ENCODE measurements at regions of chr16 and their contacts with region 1.

Region 1: DNA sequence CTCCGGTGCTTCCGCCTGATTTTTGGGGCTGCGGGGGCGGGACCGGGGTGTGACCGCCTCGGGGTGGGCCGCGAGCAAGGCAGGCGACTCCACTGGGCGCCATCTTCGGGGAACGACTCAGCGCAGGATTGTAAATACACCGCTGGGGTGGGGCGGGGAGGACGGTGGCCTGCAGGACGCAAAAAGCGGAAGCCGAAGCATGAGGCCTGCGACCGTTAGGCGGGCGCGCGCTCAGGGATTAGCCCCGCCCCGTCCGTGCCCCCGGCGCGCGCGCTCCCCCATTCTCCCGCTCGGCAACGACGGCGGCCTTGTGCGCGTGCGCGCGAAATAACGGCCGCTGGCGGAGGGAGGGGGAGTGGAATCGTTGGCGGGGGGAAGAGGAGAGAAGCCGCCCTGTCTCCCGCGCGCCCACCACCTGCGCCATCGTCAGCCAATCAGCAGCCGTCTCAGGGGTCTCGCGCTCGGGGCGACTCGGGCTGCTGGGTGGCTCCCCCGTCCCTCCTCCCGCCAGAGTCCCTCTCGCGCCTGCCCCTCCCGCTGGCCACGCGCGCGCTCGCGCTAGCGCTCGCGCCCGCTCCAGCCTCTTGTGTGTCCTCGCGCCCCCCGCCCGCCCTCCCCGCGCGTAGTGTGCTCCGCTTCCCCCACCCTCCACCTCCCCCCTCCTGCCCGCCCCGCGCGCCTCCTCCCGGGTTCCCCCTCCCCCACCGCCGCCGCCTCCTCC is 791 bp upstream of the MAZ start:
- DNase-seq: peak; percentile 95 to 99 (median 98)
- ATAC-seq: peak; percentile 63
- H3K4me3 ChIP-seq: peak overlapping the region; percentile 94
- H3K4me3 Mint-ChIP-seq: peak overlapping the region; percentile 100
- H3K27ac ChIP-seq: peak overlapping the region; percentile 92 to 96
- H3K27ac Mint-ChIP-seq: peak overlapping the region; percentile 96
- H3K4me1 ChIP-seq: peaks cover 52% of the 10 kb centered on the region
- H3K4me1 Mint-ChIP-seq: peaks cover 46% of the 10 kb centered on the region
- H3K27me3 ChIP-seq: no peaks in the 10 kb centered on the region
- H3K27me3 Mint-ChIP-seq: no peaks in the 10 kb centered on the region
- CTCF ChIP-seq: no peak

Region 2: GRCh38 chr16:29700253-29700987 is 105.1 kb before region 1 on chr16:
- CTCF ChIA-PET with region 1: interaction called, 47 read pairs
- POLR2A ChIA-PET with region 1: interaction called, 74 read pairs
- intact Hi-C with region 1: loop called in 1 of 2 experiments (anchors 5 kb)
- DNase-seq: peak; percentile 66 to 91 (median 74)
- ATAC-seq: peak; percentile 19
- H3K4me3 ChIP-seq: no peak overlapping the region
- H3K4me3 Mint-ChIP-seq: peak overlapping the region; percentile 76
- H3K27ac ChIP-seq: peak overlapping the region in 1 of 2 donors; percentile 81
- H3K27ac Mint-ChIP-seq: peak overlapping the region; percentile 94
- H3K4me1 ChIP-seq: peaks cover 41% of the 10 kb centered on the region
- H3K4me1 Mint-ChIP-seq: peaks cover 40% of the 10 kb centered on the region
- H3K27me3 ChIP-seq: no peaks in the 10 kb centered on the region
- H3K27me3 Mint-ChIP-seq: no peaks in the 10 kb centered on the region
- CTCF ChIP-seq: peak; percentile 93

Region 3: GRCh38 chr16:29784901-29785500 is 20.5 kb before region 1 on chr16:
- CTCF ChIA-PET with region 1: interaction called, 39 read pairs
- POLR2A ChIA-PET with region 1: interaction called, 217 read pairs
- intact Hi-C with region 1: loop called in 1 of 2 experiments (anchors 1 kb)
- DNase-seq: peak; percentile 55 to 87 (median 74)
- ATAC-seq: peak; percentile 91
- H3K4me3 ChIP-seq: peak overlapping the region; percentile 40
- H3K4me3 Mint-ChIP-seq: peak overlapping the region; percentile 80
- H3K27ac ChIP-seq: no peak overlapping the region
- H3K27ac Mint-ChIP-seq: peak overlapping the region; percentile 18
- H3K4me1 ChIP-seq: peaks cover 25% of the 10 kb centered on the region
- H3K4me1 Mint-ChIP-seq: peaks cover 33% of the 10 kb centered on the region
- H3K27me3 ChIP-seq: no peaks in the 10 kb centered on the region
- H3K27me3 Mint-ChIP-seq: no peaks in the 10 kb centered on the region
- CTCF ChIP-seq: peak; percentile 85

Region 4: DNA sequence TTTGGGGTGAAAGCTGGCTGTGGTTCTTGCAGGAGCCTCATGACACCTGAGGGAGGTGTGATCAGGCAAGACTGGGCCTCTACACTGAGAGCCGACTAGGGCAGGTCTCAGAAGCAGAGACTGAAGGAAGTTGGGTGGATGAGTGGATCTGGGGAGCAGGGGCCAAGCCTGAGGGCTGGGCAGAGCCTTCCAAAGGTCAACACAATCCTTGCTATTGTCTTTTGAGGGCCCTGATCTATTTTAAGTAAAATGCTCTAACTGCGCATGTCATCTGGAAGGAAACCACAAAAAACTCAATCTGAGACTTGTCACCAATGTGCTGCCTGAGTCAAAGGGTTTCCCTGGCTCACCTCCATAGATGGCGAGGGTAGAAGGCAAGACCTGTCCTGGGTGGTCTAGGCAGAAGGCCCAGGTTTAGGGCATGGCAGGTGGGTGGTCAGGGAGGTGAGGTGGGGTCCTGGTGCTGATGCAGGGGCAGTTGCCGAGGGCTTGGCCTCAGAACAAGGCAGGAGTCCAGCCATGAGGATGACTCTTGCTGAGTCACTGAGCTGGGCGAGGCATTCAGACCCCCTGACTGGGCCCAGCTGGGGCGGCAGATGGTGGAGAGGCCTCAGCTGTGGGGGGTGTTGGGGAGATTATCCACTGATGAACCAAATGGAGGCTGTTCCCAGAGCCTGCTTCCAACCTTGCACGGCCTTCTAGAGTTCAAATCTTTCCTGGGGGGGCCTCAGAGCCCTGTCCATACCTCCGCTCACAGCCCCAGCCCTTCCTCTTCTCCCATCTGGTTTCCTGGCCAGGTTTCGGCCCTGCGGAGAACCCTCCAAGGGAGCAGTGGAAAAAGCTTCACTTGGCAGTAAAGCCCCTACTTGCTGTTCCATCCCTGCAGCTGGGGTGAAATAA is 19.9 kb after region 1 on chr16:
- CTCF ChIA-PET with region 1: interaction called, 19 read pairs
- POLR2A ChIA-PET with region 1: interaction called, 190 read pairs
- intact Hi-C with region 1: loop called in 1 of 2 experiments (anchors 2 kb)
- DNase-seq: peak in 6 of 14 experiments; percentile 18 to 64 (median 48)
- ATAC-seq: peak; percentile 22
- H3K4me3 ChIP-seq: peak overlapping the region; percentile 13
- H3K4me3 Mint-ChIP-seq: peak overlapping the region; percentile 84
- H3K27ac ChIP-seq: peak overlapping the region; percentile 14 to 40
- H3K27ac Mint-ChIP-seq: peak overlapping the region; percentile 83
- H3K4me1 ChIP-seq: peaks cover 100% of the 10 kb centered on the region
- H3K4me1 Mint-ChIP-seq: peaks cover 79% of the 10 kb centered on the region
- H3K27me3 ChIP-seq: no peaks in the 10 kb centered on the region
- H3K27me3 Mint-ChIP-seq: no peaks in the 10 kb centered on the region
- CTCF ChIP-seq: no peak

Region 5: GRCh38 chr16:29926005-29926710 is 120.6 kb after region 1 on chr16 and contains the start of gene KCTD13:
- CTCF ChIA-PET with region 1: interaction called, 10 read pairs
- POLR2A ChIA-PET with region 1: interaction called, 8 read pairs
- intact Hi-C with region 1: no loop called
- DNase-seq: peak; percentile 75 to 94 (median 86)
- ATAC-seq: peak; percentile 89
- H3K4me3 ChIP-seq: peak within 1 kb of the TSS; percentile 74
- H3K4me3 Mint-ChIP-seq: peak within 1 kb of the TSS; percentile 95
- H3K27ac ChIP-seq: peak within 1 kb of the TSS; percentile 42 to 72
- H3K27ac Mint-ChIP-seq: peak within 1 kb of the TSS; percentile 93
- H3K4me1 ChIP-seq: peaks cover 30% of the 10 kb centered on the region
- H3K4me1 Mint-ChIP-seq: peaks cover 38% of the 10 kb centered on the region
- H3K27me3 ChIP-seq: no peaks in the 10 kb centered on the region
- H3K27me3 Mint-ChIP-seq: no peaks in the 10 kb centered on the region
- CTCF ChIP-seq: no peak
- total RNA-seq, gene KCTD13: 40.0 to 43.8 TPM

Region 6: GRCh38 chr16:29983420-29984136 is 178.0 kb after region 1 on chr16:
- CTCF ChIA-PET with region 1: no interaction called
- POLR2A ChIA-PET with region 1: no interaction called
- intact Hi-C with region 1: no loop called
- DNase-seq: no peak
- ATAC-seq: no peak
- H3K4me3 ChIP-seq: no peak overlapping the region
- H3K4me3 Mint-ChIP-seq: no peak overlapping the region
- H3K27ac ChIP-seq: no peak overlapping the region
- H3K27ac Mint-ChIP-seq: no peak overlapping the region
- H3K4me1 ChIP-seq: no peaks in the 10 kb centered on the region
- H3K4me1 Mint-ChIP-seq: no peaks in the 10 kb centered on the region
- H3K27me3 ChIP-seq: no peaks in the 10 kb centered on the region
- H3K27me3 Mint-ChIP-seq: no peaks in the 10 kb centered on the region
- CTCF ChIP-seq: no peak

Region 7: GRCh38 chr16:30024451-30024850 is 218.9 kb after region 1 on chr16:
- CTCF ChIA-PET with region 1: no interaction called
- POLR2A ChIA-PET with region 1: no interaction called
- intact Hi-C with region 1: loop called in 1 of 2 experiments (anchors 1 kb)
- DNase-seq: no peak
- ATAC-seq: no peak
- H3K4me3 ChIP-seq: no peak overlapping the region
- H3K4me3 Mint-ChIP-seq: no peak overlapping the region
- H3K27ac ChIP-seq: no peak overlapping the region
- H3K27ac Mint-ChIP-seq: no peak overlapping the region
- H3K4me1 ChIP-seq: peaks cover 13% of the 10 kb centered on the region
- H3K4me1 Mint-ChIP-seq: peaks cover 12% of the 10 kb centered on the region
- H3K27me3 ChIP-seq: peaks cover 11 to 21% of the 10 kb centered on the region in 2 experiments
- H3K27me3 Mint-ChIP-seq: peaks cover 25% of the 10 kb centered on the region
- CTCF ChIP-seq: no peak

Measured in CD4-positive, alpha-beta T cell (primary cell).